Dorsolateral prefrontal cortex (tissue), 120 donors: ENCODE measurements at regions of chr3 and their contacts with region 1.

Region 1: DNA sequence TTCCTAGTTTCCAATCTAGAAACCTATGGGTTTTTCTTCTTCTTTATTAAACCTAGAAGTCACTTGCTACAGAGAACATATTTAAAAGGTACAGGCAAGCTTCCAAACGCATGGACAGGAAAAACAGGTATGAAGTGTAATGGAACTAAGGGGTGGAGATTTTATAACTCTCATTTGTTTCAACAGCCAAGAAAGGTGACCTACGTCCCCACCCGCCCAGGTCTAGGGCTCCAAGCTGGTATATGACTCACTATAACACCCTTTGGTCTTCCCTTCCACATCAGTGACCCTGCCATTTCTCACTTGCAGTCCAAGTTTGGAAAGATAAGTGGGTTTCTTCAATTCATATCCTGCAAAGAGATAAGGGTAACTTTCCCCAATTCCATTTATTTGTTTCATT is 6.0 kb upstream of the LIPH start:
- DNase-seq: no peak
- H3K4me3 ChIP-seq: no peak overlapping the region
- H3K27ac ChIP-seq: no peak overlapping the region
- H3K27me3 ChIP-seq: no peaks in the 10 kb centered on the region
- CTCF ChIP-seq: no peak

Region 2: GRCh38 chr3:185308126-185308754 is 250.2 kb before region 1 on chr3:
- intact Hi-C with region 1: no loop called
- DNase-seq: no peak
- H3K4me3 ChIP-seq: no peak overlapping the region
- H3K27ac ChIP-seq: no peak overlapping the region
- H3K27me3 ChIP-seq: no peaks in the 10 kb centered on the region
- CTCF ChIP-seq: peak in 51 of 56 donors; percentile 20 to 67 (median 49)

Region 3: GRCh38 chr3:185353823-185354614 is 204.4 kb before region 1 on chr3:
- intact Hi-C with region 1: loop called in 1 of 2 experiments (anchors 5 kb)
- DNase-seq: peak in 7 of 10 donors; percentile 23 to 64 (median 54)
- H3K4me3 ChIP-seq: no peak overlapping the region
- H3K27ac ChIP-seq: no peak overlapping the region
- H3K27me3 ChIP-seq: no peaks in the 10 kb centered on the region
- CTCF ChIP-seq: peak in 54 of 56 donors; percentile 20 to 72 (median 56)

Region 4: GRCh38 chr3:185715091-185715490 is 156.7 kb after region 1 on chr3:
- intact Hi-C with region 1: no loop called
- DNase-seq: no peak
- H3K4me3 ChIP-seq: no peak overlapping the region
- H3K27ac ChIP-seq: no peak overlapping the region
- H3K27me3 ChIP-seq: peaks cover 0 to 11% (median 0%) of the 10 kb centered on the region in 45 donors
- CTCF ChIP-seq: no peak